Naive thymus-derived CD4-positive, alpha-beta T cell (primary cell): ENCODE measurements at regions of chr11 and their contacts with region 1.

Region 1: GRCh38 chr11:72471005-72471898 is 36.9 kb upstream of the CLPB start:
- DNase-seq: peak; percentile 23 to 72 (median 62)
- ATAC-seq: peak; percentile 84
- H3K4me3 ChIP-seq: no peak overlapping the region
- H3K4me3 Mint-ChIP-seq: peak overlapping the region in 6 of 10 donors; percentile 34 to 63 (median 42)
- H3K27ac ChIP-seq: no peak overlapping the region
- H3K27ac Mint-ChIP-seq: peak overlapping the region in 1 of 9 donors; percentile 2
- H3K4me1 ChIP-seq: no peaks in the 10 kb centered on the region
- H3K4me1 Mint-ChIP-seq: peaks cover 0 to 6% (median 4%) of the 10 kb centered on the region in 7 donors
- H3K27me3 ChIP-seq: no peaks in the 10 kb centered on the region
- H3K27me3 Mint-ChIP-seq: peaks cover 23 to 51% (median 34%) of the 10 kb centered on the region in 5 donors

Region 2: DNA sequence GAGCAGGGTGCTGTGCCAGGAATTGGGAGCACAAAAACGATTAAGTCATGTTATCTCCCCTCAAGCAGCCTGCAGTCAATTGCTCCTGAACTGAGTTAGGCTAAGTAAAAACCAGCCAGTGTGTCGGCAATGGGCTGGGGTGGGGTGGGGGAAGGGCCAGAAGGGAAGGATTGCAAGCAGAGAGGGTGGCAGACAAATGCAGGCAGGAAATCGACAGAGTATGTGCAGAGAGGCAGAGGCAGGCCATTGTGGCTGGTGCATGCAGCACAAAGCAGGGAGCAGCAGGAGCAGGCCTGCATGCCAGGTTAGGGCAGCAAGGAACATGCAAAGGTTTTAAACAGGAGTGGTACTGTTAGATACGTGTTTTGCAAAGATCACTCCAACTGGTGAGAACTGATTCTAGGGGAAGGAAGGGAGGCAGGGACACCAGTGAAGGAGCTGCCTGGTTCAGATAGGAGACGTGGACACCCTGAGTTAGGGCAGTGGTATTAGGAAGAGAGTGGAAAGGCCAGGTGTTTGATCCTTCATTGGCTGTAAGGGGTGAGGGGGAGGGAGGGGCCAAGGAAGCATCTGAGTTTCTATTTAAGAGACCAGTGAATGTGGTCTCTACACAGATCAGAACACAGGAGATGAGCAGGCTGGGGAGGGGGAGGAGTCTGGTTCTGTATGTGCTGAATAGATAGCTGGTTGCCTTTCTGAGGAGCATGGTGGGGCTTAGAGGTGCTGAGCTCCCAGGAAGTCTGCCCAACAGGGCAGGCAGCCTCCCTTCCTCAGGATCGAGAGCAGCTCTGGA is 156.5 kb before region 1 on chr11:
- CTCF ChIA-PET with region 1: no interaction called
- POLR2A ChIA-PET with region 1: no interaction called
- intact Hi-C with region 1: no loop called
- DNase-seq: no peak
- ATAC-seq: no peak
- H3K4me3 ChIP-seq: no peak overlapping the region
- H3K4me3 Mint-ChIP-seq: no peak overlapping the region
- H3K27ac ChIP-seq: no peak overlapping the region
- H3K27ac Mint-ChIP-seq: peak overlapping the region in 2 of 9 donors; percentile 52 to 80
- H3K4me1 ChIP-seq: no peaks in the 10 kb centered on the region
- H3K4me1 Mint-ChIP-seq: peaks cover 0 to 4% (median 0%) of the 10 kb centered on the region in 7 donors
- H3K27me3 ChIP-seq: no peaks in the 10 kb centered on the region
- H3K27me3 Mint-ChIP-seq: no peaks in the 10 kb centered on the region

Region 3: GRCh38 chr11:72553706-72554105 is 82.5 kb after region 1 on chr11:
- CTCF ChIA-PET with region 1: interaction called, 7 read pairs
- POLR2A ChIA-PET with region 1: no interaction called
- intact Hi-C with region 1: loop called (anchors 1 kb)
- DNase-seq: peak in 3 of 9 donors; percentile 1 to 8 (median 6)
- ATAC-seq: no peak
- H3K4me3 ChIP-seq: no peak overlapping the region
- H3K4me3 Mint-ChIP-seq: peak overlapping the region in 1 of 10 donors; percentile 23
- H3K27ac ChIP-seq: no peak overlapping the region
- H3K27ac Mint-ChIP-seq: no peak overlapping the region
- H3K4me1 ChIP-seq: no peaks in the 10 kb centered on the region
- H3K4me1 Mint-ChIP-seq: peaks cover 0 to 9% (median 5%) of the 10 kb centered on the region in 7 donors
- H3K27me3 ChIP-seq: no peaks in the 10 kb centered on the region
- H3K27me3 Mint-ChIP-seq: peaks cover 3 to 34% (median 10%) of the 10 kb centered on the region in 5 donors

Region 4: GRCh38 chr11:72573072-72573854 is 102.0 kb after region 1 on chr11:
- CTCF ChIA-PET with region 1: interaction called, 8 read pairs
- POLR2A ChIA-PET with region 1: no interaction called
- intact Hi-C with region 1: loop called in 1 of 2 experiments (anchors 1 kb)
- DNase-seq: peak in 3 of 9 donors; percentile 7 to 29 (median 16)
- ATAC-seq: peak; percentile 73
- H3K4me3 ChIP-seq: no peak overlapping the region
- H3K4me3 Mint-ChIP-seq: peak overlapping the region in 1 of 10 donors; percentile 8
- H3K27ac ChIP-seq: no peak overlapping the region
- H3K27ac Mint-ChIP-seq: peak overlapping the region in 1 of 9 donors; percentile 11
- H3K4me1 ChIP-seq: no peaks in the 10 kb centered on the region
- H3K4me1 Mint-ChIP-seq: peaks cover 0 to 18% (median 0%) of the 10 kb centered on the region in 7 donors
- H3K27me3 ChIP-seq: no peaks in the 10 kb centered on the region
- H3K27me3 Mint-ChIP-seq: peaks cover 5 to 19% (median 13%) of the 10 kb centered on the region in 5 donors

Region 5: DNA sequence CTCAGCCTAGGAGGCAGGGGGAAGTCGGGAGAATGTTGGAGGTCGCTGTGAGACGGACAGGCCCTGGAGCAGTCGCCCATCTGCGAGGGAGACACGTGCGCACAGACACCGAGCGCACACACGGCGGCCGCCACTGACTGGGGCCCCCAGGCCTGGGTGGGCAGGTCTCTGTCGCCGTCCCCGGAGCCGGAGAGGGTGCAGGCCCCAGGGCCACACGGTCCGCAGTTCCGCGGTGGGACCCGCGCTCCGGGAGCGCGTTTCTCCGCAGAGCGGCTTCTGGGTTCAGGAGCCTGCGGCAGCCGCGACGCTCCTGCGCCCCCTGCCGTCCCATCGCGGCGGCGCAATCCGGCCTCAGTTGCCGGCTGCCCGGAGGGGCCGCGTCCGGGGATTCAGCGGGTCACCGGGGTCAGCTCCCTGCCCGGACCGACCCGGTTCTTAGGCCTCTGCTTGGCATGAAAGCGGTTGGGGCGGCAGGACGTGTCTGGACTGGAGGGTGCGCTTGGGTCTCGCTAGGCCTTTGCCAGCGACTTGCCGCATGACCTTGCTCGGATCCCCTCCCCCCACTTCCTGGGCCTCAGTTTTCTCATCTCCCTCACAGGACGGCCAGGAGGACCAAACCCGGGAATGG is 171.7 kb after region 1 on chr11:
- CTCF ChIA-PET with region 1: interaction called, 5 read pairs
- POLR2A ChIA-PET with region 1: no interaction called
- intact Hi-C with region 1: loop called (anchors 1 kb)
- DNase-seq: peak; percentile 25 to 81 (median 70)
- ATAC-seq: peak; percentile 82
- H3K4me3 ChIP-seq: peak overlapping the region; percentile 55
- H3K4me3 Mint-ChIP-seq: peak overlapping the region in 8 of 10 donors; percentile 27 to 72 (median 64)
- H3K27ac ChIP-seq: no peak overlapping the region
- H3K27ac Mint-ChIP-seq: peak overlapping the region in 1 of 9 donors; percentile 7
- H3K4me1 ChIP-seq: no peaks in the 10 kb centered on the region
- H3K4me1 Mint-ChIP-seq: peaks cover 0 to 6% (median 0%) of the 10 kb centered on the region in 7 donors
- H3K27me3 ChIP-seq: no peaks in the 10 kb centered on the region
- H3K27me3 Mint-ChIP-seq: peaks cover 0 to 15% (median 0%) of the 10 kb centered on the region in 5 donors

Region 6: GRCh38 chr11:72683782-72684200 is 212.5 kb after region 1 on chr11:
- CTCF ChIA-PET with region 1: interaction called, 5 read pairs
- POLR2A ChIA-PET with region 1: no interaction called
- intact Hi-C with region 1: loop called (anchors 1 kb)
- DNase-seq: peak; percentile 36 to 75 (median 56)
- ATAC-seq: peak; percentile 77
- H3K4me3 ChIP-seq: no peak overlapping the region
- H3K4me3 Mint-ChIP-seq: no peak overlapping the region
- H3K27ac ChIP-seq: no peak overlapping the region
- H3K27ac Mint-ChIP-seq: peak overlapping the region in 3 of 9 donors; percentile 59 to 74 (median 61)
- H3K4me1 ChIP-seq: no peaks in the 10 kb centered on the region
- H3K4me1 Mint-ChIP-seq: peaks cover 7 to 46% (median 16%) of the 10 kb centered on the region in 7 donors
- H3K27me3 ChIP-seq: no peaks in the 10 kb centered on the region
- H3K27me3 Mint-ChIP-seq: peaks cover 0 to 11% (median 0%) of the 10 kb centered on the region in 5 donors

Region 7: GRCh38 chr11:72821883-72822799 is 350.9 kb after region 1 on chr11:
- CTCF ChIA-PET with region 1: no interaction called
- POLR2A ChIA-PET with region 1: no interaction called
- intact Hi-C with region 1: no loop called
- DNase-seq: peak; percentile 68 to 93 (median 82)
- ATAC-seq: peak; percentile 96
- H3K4me3 ChIP-seq: peak overlapping the region; percentile 33
- H3K4me3 Mint-ChIP-seq: peak overlapping the region in 4 of 10 donors; percentile 34 to 65 (median 48)
- H3K27ac ChIP-seq: peak overlapping the region; percentile 66
- H3K27ac Mint-ChIP-seq: peak overlapping the region in 6 of 9 donors; percentile 23 to 86 (median 68)
- H3K4me1 ChIP-seq: peaks cover 0 to 3% of the 10 kb centered on the region in 2 donors
- H3K4me1 Mint-ChIP-seq: peaks cover 13 to 30% (median 25%) of the 10 kb centered on the region in 7 donors
- H3K27me3 ChIP-seq: no peaks in the 10 kb centered on the region
- H3K27me3 Mint-ChIP-seq: no peaks in the 10 kb centered on the region

Region 8: GRCh38 chr11:73242251-73243079 is 771.2 kb after region 1 on chr11:
- CTCF ChIA-PET with region 1: no interaction called
- POLR2A ChIA-PET with region 1: no interaction called
- intact Hi-C with region 1: loop called in 1 of 2 experiments (anchors 1 kb)
- DNase-seq: peak in 8 of 9 donors; percentile 26 to 76 (median 56)
- ATAC-seq: peak; percentile 93
- H3K4me3 ChIP-seq: no peak overlapping the region
- H3K4me3 Mint-ChIP-seq: peak overlapping the region in 4 of 10 donors; percentile 2 to 65 (median 48)
- H3K27ac ChIP-seq: no peak overlapping the region
- H3K27ac Mint-ChIP-seq: peak overlapping the region in 1 of 9 donors; percentile 5
- H3K4me1 ChIP-seq: peaks cover 0 to 6% of the 10 kb centered on the region in 2 donors
- H3K4me1 Mint-ChIP-seq: peaks cover 0 to 7% (median 0%) of the 10 kb centered on the region in 7 donors
- H3K27me3 ChIP-seq: no peaks in the 10 kb centered on the region
- H3K27me3 Mint-ChIP-seq: peaks cover 0 to 18% (median 0%) of the 10 kb centered on the region in 5 donors

Region 9: DNA sequence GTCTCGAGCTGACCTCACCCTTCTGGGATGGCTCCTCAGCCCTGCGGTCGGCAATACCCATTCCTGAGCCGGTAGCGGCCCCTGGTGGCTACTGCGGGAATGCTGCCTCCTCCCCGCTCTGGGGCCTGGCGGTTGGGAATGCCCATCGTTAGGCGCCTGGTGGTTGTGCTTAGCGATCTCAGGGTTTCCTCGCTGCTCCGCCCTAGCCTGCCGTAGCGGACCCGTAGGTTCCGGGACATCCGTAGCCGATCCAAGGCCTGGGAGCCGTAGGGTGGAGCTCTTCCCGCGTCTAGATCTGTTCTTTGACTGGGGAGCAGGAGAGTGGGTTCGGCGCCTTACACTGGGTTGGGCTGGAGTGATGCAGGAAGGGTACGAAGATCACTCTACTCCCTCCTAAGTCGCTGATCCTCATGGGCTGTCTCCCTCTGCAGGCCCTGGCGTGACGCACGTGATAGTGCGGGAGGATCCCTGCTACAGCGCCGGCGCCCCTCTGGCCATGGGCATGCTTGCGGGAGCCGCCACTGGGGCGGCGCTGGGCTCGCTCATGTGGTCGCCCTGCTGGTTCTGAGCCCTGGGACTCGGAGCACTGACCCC is 1189.9 kb after region 1 on chr11:
- CTCF ChIA-PET with region 1: no interaction called
- POLR2A ChIA-PET with region 1: no interaction called
- intact Hi-C with region 1: no loop called
- DNase-seq: peak; percentile 67 to 91 (median 80)
- ATAC-seq: peak; percentile 97
- H3K4me3 ChIP-seq: no peak overlapping the region
- H3K4me3 Mint-ChIP-seq: peak overlapping the region in 5 of 10 donors; percentile 29 to 58 (median 36)
- H3K27ac ChIP-seq: no peak overlapping the region
- H3K27ac Mint-ChIP-seq: peak overlapping the region in 4 of 9 donors; percentile 14 to 41 (median 34)
- H3K4me1 ChIP-seq: peaks cover 5 to 15% of the 10 kb centered on the region in 2 donors
- H3K4me1 Mint-ChIP-seq: peaks cover 13 to 32% (median 23%) of the 10 kb centered on the region in 7 donors
- H3K27me3 ChIP-seq: no peaks in the 10 kb centered on the region
- H3K27me3 Mint-ChIP-seq: no peaks in the 10 kb centered on the region